Dendritic cell treated with granulocyte-macrophage colony-stimulating factor and Interleukin-4, amounts not matched to agents 40 ng/mL and 50 ng/mL, for 4 days (primary cell): ENCODE measurements at regions of chr1 and their contacts with region 1.

Region 1: GRCh38 chr1:179293340-179294327 is at the start of gene SOAT1:
- H3K4me3 Mint-ChIP-seq: peak within 1 kb of the TSS; percentile 82
- H3K27ac Mint-ChIP-seq: peak within 1 kb of the TSS; percentile 80
- H3K4me1 Mint-ChIP-seq: peaks cover 68% of the 10 kb centered on the region
- H3K27me3 Mint-ChIP-seq: no peaks in the 10 kb centered on the region

Region 2: DNA sequence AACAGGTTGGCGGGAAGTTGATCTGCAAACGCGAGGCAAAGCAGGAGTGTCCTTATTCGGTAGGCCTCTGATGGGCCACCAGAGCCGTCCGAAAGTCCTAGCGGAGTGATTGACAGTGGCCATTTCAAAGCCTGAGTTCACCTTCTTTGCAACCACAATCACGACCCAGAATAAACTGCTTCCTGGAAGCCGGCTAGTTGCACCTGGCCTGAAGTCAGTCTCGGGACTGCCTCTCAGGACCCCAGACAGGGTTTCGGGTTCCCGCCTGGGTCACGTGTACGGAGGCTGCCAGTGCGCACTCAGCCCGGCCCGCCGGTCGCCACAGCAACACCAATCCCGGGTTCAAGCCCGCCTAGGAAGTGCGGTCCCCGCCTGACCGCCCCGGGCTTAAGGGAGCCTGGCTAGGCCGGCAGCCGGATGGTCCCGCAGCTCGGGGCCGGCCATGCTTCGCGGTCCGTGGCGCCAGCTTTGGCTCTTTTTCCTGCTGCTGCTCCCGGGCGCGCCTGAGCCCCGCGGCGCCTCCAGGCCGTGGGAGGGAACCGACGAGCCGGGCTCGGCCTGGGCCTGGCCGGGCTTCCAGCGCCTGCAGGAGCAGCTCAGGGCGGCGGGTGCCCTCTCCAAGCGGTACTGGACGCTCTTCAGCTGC is 211.8 kb before region 1 on chr1 and contains the start of gene TOR3A:
- intact Hi-C with region 1: loop called (anchors 2 kb)
- H3K4me3 Mint-ChIP-seq: peak within 1 kb of the TSS; percentile 92
- H3K27ac Mint-ChIP-seq: peak within 1 kb of the TSS; percentile 89
- H3K4me1 Mint-ChIP-seq: peaks cover 41% of the 10 kb centered on the region
- H3K27me3 Mint-ChIP-seq: no peaks in the 10 kb centered on the region

Region 3: DNA sequence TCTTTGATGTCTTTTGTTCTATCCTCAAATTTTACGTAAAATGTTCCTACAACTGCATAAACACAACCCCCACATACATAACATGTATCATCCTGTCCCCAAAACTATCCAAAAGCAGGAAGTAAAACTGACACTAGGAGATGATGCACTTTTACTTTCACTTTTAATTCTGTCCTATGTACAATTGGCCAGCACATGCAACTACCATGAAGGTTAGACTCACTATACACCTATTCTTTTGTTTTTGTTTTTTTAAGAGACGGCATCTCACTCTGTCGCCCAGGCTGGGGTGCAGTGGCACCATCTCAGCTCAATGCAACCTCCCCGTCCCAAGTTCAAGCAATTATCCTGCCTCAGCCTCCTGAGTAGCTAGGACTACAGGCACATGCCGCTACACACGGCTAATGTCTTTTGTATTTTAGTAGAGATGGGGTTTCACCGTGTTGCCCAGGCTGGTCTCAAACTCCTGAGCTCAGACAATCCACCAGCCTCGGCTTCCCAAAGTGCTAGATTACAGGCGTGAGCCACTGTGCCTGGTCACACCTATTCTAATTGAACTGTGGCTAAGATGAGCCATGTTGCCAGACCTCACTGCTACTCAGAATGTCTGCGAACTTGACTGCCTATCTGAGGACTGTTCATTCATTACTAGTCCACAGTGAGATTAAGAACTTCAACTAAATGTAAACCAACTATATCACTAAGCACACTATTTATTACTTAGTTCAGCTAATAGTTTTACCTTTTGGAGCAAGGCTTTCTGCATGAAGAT is 163.7 kb before region 1 on chr1:
- intact Hi-C with region 1: loop called (anchors 5 kb)
- H3K4me3 Mint-ChIP-seq: no peak overlapping the region
- H3K27ac Mint-ChIP-seq: peak overlapping the region; percentile 54
- H3K4me1 Mint-ChIP-seq: peaks cover 34% of the 10 kb centered on the region
- H3K27me3 Mint-ChIP-seq: no peaks in the 10 kb centered on the region

Region 4: GRCh38 chr1:179229214-179230140 is 64.2 kb before region 1 on chr1 and contains the start of gene ABL2:
- intact Hi-C with region 1: loop called (anchors 10 kb)
- H3K4me3 Mint-ChIP-seq: peak within 1 kb of the TSS; percentile 99
- H3K27ac Mint-ChIP-seq: peak within 1 kb of the TSS; percentile 86
- H3K4me1 Mint-ChIP-seq: peaks cover 53% of the 10 kb centered on the region
- H3K27me3 Mint-ChIP-seq: no peaks in the 10 kb centered on the region

Region 5: DNA sequence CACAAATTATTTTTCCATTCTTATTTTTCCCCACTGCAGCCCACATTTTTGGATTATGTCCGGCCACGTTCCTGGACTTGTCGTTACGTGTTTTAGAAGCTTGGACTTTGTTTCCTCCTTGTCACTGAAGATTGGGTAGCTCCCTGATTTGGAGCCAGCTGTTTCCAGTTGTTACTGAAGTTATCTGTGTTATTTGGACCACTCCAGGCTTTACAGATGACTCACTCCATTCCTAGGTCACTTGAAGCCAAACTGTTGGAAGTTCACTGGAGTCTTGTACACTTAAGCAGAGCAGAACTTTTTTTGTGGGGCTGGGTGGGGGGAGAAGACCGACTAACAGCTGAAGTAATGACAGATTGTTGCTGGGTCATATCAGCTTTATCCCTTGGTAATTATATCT is 59.9 kb after region 1 on chr1:
- intact Hi-C with region 1: no loop called
- H3K4me3 Mint-ChIP-seq: no peak overlapping the region
- H3K27ac Mint-ChIP-seq: no peak overlapping the region
- H3K4me1 Mint-ChIP-seq: peaks cover 5% of the 10 kb centered on the region
- H3K27me3 Mint-ChIP-seq: no peaks in the 10 kb centered on the region